A549 (cell line): ENCODE measurements at regions of chr3 and their contacts with region 1.

Region 1: GRCh38 chr3:39288300-39288808 is 8.5 kb upstream of the CX3CR1 start:
- DNase-seq: peak; percentile 83 to 95
- ATAC-seq: peak; percentile 94 to 97
- H3K4me3 ChIP-seq: no peak overlapping the region
- H3K27ac ChIP-seq: no peak overlapping the region
- H3K4me1 ChIP-seq: no peaks in the 10 kb centered on the region; the same call in 2 of the 3 replicates
- CTCF ChIP-seq: peak; percentile 89
- EP300 ChIP-seq: no peak
- POLR2A ChIP-seq: no peak
- RAD21 ChIP-seq: peak; percentile 98 to 99

Region 2: DNA sequence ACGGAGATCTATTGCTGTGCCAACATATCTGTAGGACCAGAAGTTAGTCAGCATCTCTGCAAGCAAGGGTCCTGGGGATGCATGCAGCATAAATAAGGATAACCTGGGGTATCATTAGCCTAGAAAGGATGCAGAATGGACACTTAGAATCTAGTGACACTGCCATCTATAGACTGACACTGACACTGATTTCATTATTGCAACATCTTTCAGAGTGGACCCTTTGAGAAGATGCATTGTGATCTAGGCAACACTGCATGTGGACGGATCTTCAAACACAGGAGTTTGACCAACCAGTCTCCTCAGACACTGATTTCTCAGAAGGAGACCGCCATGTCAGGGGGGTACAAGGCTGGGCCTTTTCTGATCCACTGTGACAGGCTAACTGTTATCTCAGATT is 524.8 kb before region 1 on chr3:
- CTCF ChIA-PET with region 1: no interaction called
- POLR2A ChIA-PET with region 1: no interaction called
- DNase-seq: no peak
- ATAC-seq: no peak
- H3K4me3 ChIP-seq: no peak overlapping the region
- H3K27ac ChIP-seq: no peak overlapping the region
- H3K4me1 ChIP-seq: no peaks in the 10 kb centered on the region
- CTCF ChIP-seq: no peak
- EP300 ChIP-seq: no peak
- POLR2A ChIP-seq: no peak
- RAD21 ChIP-seq: no peak

Region 3: GRCh38 chr3:39079530-39079929 is 208.8 kb before region 1 on chr3:
- CTCF ChIA-PET with region 1: interaction called, 22 read pairs
- POLR2A ChIA-PET with region 1: no interaction called
- DNase-seq: no peak
- ATAC-seq: no peak
- H3K4me3 ChIP-seq: no peak overlapping the region
- H3K27ac ChIP-seq: no peak overlapping the region
- H3K4me1 ChIP-seq: no peaks in the 10 kb centered on the region
- CTCF ChIP-seq: peak; percentile 12; the same call in 1 of the 3 replicates
- EP300 ChIP-seq: no peak
- POLR2A ChIP-seq: no peak
- RAD21 ChIP-seq: peak in 1 of 2 experiments; percentile 20; a peak in 1 of 5 replicates

Region 4: DNA sequence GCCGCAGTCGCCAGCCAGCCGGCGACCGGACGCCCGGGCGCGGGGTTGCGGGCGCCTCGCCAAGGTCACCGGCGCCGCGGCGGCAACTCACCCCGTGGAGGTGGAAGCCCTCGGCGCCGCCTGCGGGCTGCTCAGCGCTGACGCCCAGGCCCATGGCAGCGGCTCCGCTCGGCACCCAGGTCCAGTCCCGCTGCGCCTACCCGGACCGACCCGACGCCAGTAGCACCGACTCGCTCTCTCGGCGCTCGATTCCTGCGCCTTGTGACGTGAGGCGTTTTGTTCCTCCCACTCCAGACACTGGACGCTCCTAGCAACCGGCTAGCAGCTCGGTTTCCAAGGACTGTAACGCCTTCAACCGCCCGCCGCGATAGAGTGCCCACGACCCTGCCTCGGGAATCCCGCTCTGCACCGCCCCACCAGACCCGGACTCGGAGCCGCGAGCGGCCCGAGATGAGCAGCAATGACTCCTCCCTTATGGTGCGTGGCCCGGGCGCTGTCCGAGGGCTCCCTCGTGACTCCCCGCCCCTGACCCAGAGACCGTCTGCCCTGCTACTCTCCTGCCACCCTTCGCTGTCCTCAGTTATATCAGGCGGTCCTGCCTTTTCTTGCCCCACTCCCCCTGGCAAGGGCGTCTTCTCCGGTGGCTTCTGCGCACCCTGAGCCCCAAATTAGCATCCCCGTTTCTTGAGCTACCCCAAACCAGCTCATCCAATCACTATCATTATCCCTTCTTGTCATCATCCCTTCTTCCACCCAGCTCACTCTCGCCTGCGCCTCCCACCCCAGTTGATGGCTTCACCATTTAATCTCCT is 180.8 kb before region 1 on chr3 and contains the starts of genes GORASP1 and TTC21A:
- CTCF ChIA-PET with region 1: interaction called, 164 read pairs
- POLR2A ChIA-PET with region 1: interaction called, 5 read pairs
- DNase-seq: peak; percentile 82 to 91
- ATAC-seq: peak; percentile 83 to 87
- H3K4me3 ChIP-seq: peak within 1 kb of the TSS; percentile 83
- H3K27ac ChIP-seq: peak within 1 kb of the TSS; percentile 92 to 95
- H3K4me1 ChIP-seq: peaks cover 13% of the 10 kb centered on the region; the same call in 2 of the 3 replicates
- CTCF ChIP-seq: no peak
- EP300 ChIP-seq: no peak
- POLR2A ChIP-seq: peak; percentile 79
- RAD21 ChIP-seq: no peak
- polyA plus RNA-seq, gene GORASP1: 30.3 and 38.9 TPM in 2 replicates
- polyA plus RNA-seq, gene TTC21A: 1.4 and 2.0 TPM in 2 replicates

Region 5: GRCh38 chr3:39141171-39141995 is 147.0 kb before region 1 on chr3:
- CTCF ChIA-PET with region 1: interaction called, 10 read pairs
- POLR2A ChIA-PET with region 1: no interaction called
- DNase-seq: no peak
- ATAC-seq: peak in 1 of 2 experiments; percentile 28; a peak in 3 of 6 replicates
- H3K4me3 ChIP-seq: no peak overlapping the region
- H3K27ac ChIP-seq: peak overlapping the region in 1 of 2 experiments; percentile 58; a peak in 3 of 6 replicates
- H3K4me1 ChIP-seq: peaks cover 35% of the 10 kb centered on the region
- CTCF ChIP-seq: no peak
- EP300 ChIP-seq: no peak
- POLR2A ChIP-seq: no peak
- RAD21 ChIP-seq: no peak

Region 6: GRCh38 chr3:39202094-39202493 is 86.3 kb before region 1 on chr3:
- CTCF ChIA-PET with region 1: interaction called, 459 read pairs
- POLR2A ChIA-PET with region 1: no interaction called
- DNase-seq: no peak
- ATAC-seq: peak in 1 of 2 experiments; percentile 67; a peak in 3 of 6 replicates
- H3K4me3 ChIP-seq: no peak overlapping the region
- H3K27ac ChIP-seq: no peak overlapping the region
- H3K4me1 ChIP-seq: no peaks in the 10 kb centered on the region
- CTCF ChIP-seq: no peak
- EP300 ChIP-seq: no peak
- POLR2A ChIP-seq: no peak
- RAD21 ChIP-seq: no peak

Region 7: GRCh38 chr3:39260957-39261356 is 27.4 kb before region 1 on chr3:
- CTCF ChIA-PET with region 1: interaction called, 12 read pairs
- POLR2A ChIA-PET with region 1: no interaction called
- DNase-seq: peak; percentile 75 to 89
- ATAC-seq: peak; percentile 94 to 96
- H3K4me3 ChIP-seq: no peak overlapping the region
- H3K27ac ChIP-seq: no peak overlapping the region
- H3K4me1 ChIP-seq: peaks cover 10% of the 10 kb centered on the region; the same call in 2 of the 3 replicates
- CTCF ChIP-seq: peak; percentile 35; the same call in 1 of the 3 replicates
- EP300 ChIP-seq: no peak
- POLR2A ChIP-seq: no peak
- RAD21 ChIP-seq: peak; percentile 19 to 40; a peak in 2 of 5 replicates

Region 8: DNA sequence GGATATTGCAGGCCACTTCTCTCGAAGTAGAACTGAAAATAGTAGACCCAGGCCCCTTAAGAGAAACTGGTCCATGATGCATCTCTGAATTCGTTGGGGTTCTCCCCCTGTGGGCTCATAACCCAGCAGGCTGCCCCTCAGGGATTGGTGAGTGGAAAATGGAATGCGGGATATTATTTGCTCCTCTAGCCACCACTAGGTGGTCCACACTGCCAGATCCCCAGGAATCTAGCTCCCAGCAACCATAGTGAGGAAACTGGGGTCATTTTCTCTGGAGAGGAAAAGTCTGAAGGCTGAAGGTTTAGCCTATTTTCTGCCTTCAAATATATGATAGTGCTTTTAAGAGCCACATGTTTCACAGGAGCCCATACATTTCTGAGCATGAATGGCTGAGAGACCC is 15.2 kb before region 1 on chr3:
- CTCF ChIA-PET with region 1: interaction called, 42 read pairs
- POLR2A ChIA-PET with region 1: no interaction called
- DNase-seq: no peak
- ATAC-seq: peak in 1 of 2 experiments; percentile 67; a peak in 2 of 6 replicates
- H3K4me3 ChIP-seq: no peak overlapping the region
- H3K27ac ChIP-seq: no peak overlapping the region
- H3K4me1 ChIP-seq: no peaks in the 10 kb centered on the region
- CTCF ChIP-seq: 0 out of 3 replicates have a peak, but pooled peaks have one; percentile 8
- EP300 ChIP-seq: no peak
- POLR2A ChIP-seq: no peak
- RAD21 ChIP-seq: no peak

Region 9: DNA sequence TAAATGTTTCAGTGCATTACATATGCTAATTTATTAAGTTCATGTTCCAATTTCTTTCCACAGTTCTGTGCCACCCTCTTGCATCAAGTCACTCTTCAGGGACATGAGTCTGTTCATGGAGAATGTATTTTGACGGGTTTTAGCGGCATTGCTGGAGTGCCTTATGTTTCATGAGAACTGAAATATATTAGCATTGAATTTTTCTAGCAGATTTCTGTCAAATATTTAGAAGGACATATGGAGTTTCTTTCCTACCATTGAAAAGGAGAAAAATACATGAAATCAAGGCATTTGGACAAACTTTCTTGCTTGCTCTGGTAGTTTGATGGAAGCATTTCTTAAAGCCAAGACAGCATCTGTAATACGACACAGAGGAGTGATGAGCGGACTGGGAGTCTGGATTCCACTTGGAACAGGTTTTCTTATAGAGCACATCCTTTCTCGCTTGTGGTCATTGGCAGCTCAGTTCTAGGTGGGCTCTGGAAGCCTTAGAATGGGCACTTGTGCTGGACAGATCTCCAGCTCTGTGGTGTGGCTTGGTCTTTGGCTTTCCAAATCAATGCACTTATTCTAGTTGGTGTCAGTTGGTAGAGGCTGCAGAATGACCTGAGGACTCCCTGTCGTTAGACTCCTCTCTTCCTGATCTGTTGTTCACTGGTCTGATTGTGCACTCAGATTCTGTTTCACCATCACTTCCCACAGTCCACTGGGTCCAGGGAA is 936.6 kb after region 1 on chr3:
- CTCF ChIA-PET with region 1: no interaction called
- POLR2A ChIA-PET with region 1: no interaction called
- DNase-seq: no peak
- ATAC-seq: no peak
- H3K4me3 ChIP-seq: no peak overlapping the region
- H3K27ac ChIP-seq: no peak overlapping the region
- H3K4me1 ChIP-seq: no peaks in the 10 kb centered on the region
- CTCF ChIP-seq: no peak
- EP300 ChIP-seq: no peak
- POLR2A ChIP-seq: no peak
- RAD21 ChIP-seq: no peak